Naive thymus-derived CD4-positive, alpha-beta T cell (primary cell): ENCODE measurements at regions of chr7 and their contacts with region 1.

Region 1: GRCh38 chr7:140479062-140479738 is at the start of gene MKRN1:
- DNase-seq: peak; percentile 87 to 93 (median 92)
- ATAC-seq: peak; percentile 93
- H3K4me3 ChIP-seq: peak within 1 kb of the TSS; percentile 84
- H3K4me3 Mint-ChIP-seq: peak within 1 kb of the TSS; percentile 90 to 100 (median 98)
- H3K27ac ChIP-seq: peak within 1 kb of the TSS; percentile 89
- H3K27ac Mint-ChIP-seq: peak within 1 kb of the TSS; percentile 92 to 99 (median 99)
- H3K4me1 ChIP-seq: peaks cover 21 to 28% of the 10 kb centered on the region in 2 donors
- H3K4me1 Mint-ChIP-seq: peaks cover 13 to 35% (median 25%) of the 10 kb centered on the region in 7 donors
- H3K27me3 ChIP-seq: no peaks in the 10 kb centered on the region
- H3K27me3 Mint-ChIP-seq: peaks cover 0 to 15% (median 0%) of the 10 kb centered on the region in 5 donors
- total RNA-seq, gene MKRN1: 85.1 to 162 (median 144) TPM

Region 2: DNA sequence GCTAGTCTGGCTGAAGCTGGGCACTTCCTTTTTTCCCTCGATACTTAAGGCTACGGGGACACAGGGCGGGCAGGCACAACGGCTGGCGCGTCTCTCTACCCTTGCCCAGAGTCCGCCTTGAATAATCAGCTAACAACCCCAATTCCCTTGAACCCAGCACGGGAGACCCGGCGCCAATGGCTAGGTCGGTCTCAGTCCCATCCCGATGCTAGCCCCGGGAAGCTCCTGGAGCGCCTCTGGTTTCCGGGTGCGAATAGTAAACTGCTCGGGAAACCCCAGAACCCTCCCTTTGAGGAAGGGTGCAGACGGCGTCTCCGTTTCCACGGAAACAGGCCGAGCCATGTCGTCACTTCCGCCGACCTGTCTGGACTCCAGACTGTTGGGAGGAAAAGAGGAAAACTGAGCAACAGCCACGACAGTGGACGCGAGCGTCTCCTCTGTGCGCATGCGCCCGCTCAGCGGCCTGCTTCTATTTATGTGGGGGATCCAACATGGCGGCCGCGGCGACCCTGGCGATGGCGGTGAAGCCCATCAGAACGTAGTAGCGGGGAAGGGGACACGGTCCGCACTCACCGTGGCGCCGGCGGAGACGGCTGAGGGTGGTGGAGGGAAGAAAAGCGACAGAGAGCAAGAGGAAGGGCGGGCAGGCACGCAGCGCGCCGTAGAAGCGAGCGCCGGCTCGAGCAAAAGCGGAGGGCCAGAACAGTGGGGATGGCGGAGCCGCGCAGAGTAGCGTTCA is 1248.3 kb before region 1 on chr7 and contains the start of gene UBN2:
- CTCF ChIA-PET with region 1: no interaction called
- POLR2A ChIA-PET with region 1: no interaction called
- intact Hi-C with region 1: loop called in 1 of 2 experiments (anchors 2 kb)
- DNase-seq: peak; percentile 68 to 91 (median 76)
- ATAC-seq: peak; percentile 86
- H3K4me3 ChIP-seq: peak within 1 kb of the TSS; percentile 77
- H3K4me3 Mint-ChIP-seq: peak within 1 kb of the TSS; percentile 96 to 100 (median 99)
- H3K27ac ChIP-seq: peak within 1 kb of the TSS; percentile 85
- H3K27ac Mint-ChIP-seq: peak within 1 kb of the TSS; percentile 93 to 98 (median 96)
- H3K4me1 ChIP-seq: no peaks in the 10 kb centered on the region
- H3K4me1 Mint-ChIP-seq: peaks cover 24 to 33% (median 29%) of the 10 kb centered on the region in 7 donors
- H3K27me3 ChIP-seq: no peaks in the 10 kb centered on the region
- H3K27me3 Mint-ChIP-seq: peaks cover 0 to 36% (median 5%) of the 10 kb centered on the region in 5 donors
- total RNA-seq, gene UBN2: 16.2 to 31.2 (median 20.5) TPM

Region 3: DNA sequence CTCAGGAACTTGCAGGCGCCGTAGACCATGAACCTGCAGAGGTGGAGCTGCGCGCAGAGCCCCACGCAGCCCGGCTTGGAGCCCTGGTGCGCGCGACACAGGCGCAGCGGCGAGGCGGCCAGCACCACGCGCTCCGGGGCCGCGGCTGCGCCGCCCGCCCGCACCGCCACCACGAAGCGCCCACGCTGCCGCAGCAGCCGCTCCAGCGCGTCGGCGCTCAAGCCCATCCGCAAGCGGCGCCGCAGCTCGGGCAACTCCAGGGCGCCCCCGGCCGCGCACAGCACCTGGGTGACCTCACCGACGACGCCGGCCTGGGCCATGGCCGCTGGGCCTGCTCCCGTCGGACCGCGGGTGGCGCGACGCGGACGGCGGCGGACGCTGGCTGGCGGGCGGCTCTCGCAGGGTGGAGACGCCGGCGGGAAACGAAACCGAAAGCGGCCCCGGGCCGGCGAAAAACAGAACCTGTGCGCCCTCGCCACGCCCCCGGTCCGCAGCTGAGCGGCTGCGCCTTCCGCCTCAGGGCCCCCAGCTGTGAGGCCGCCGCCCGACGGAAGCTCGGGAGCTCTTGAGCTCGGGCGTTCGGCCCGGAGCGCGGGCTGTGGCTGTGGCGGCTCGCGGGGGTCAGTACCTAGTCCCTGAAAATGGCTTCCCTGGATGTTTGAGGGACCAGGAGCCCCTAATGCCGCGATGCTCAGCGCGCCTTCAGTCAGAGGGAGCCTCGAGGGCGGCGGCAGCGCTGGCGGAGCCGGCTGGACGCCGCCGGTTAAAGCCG is 416.5 kb before region 1 on chr7 and contains the start of gene PARP12:
- CTCF ChIA-PET with region 1: no interaction called
- POLR2A ChIA-PET with region 1: no interaction called
- intact Hi-C with region 1: loop called (anchors 2 to 5 kb)
- DNase-seq: peak; percentile 77 to 86 (median 83)
- ATAC-seq: peak; percentile 91
- H3K4me3 ChIP-seq: peak within 1 kb of the TSS; percentile 79
- H3K4me3 Mint-ChIP-seq: peak within 1 kb of the TSS; percentile 79 to 94 (median 90)
- H3K27ac ChIP-seq: peak within 1 kb of the TSS; percentile 81
- H3K27ac Mint-ChIP-seq: peak within 1 kb of the TSS; percentile 83 to 95 (median 92)
- H3K4me1 ChIP-seq: peaks cover 32 to 38% of the 10 kb centered on the region in 2 donors
- H3K4me1 Mint-ChIP-seq: peaks cover 34 to 55% (median 48%) of the 10 kb centered on the region in 7 donors
- H3K27me3 ChIP-seq: no peaks in the 10 kb centered on the region
- H3K27me3 Mint-ChIP-seq: peaks cover 0 to 7% (median 0%) of the 10 kb centered on the region in 5 donors
- total RNA-seq, gene PARP12: 66.2 to 145 (median 94.5) TPM

Region 4: GRCh38 chr7:140397784-140398750 is 81.1 kb before region 1 on chr7 and contains the start of gene SLC37A3:
- CTCF ChIA-PET with region 1: no interaction called
- POLR2A ChIA-PET with region 1: interaction called, 4 read pairs
- intact Hi-C with region 1: loop called in 1 of 2 experiments (anchors 1 kb)
- DNase-seq: peak; percentile 74 to 93 (median 80)
- ATAC-seq: peak; percentile 97
- H3K4me3 ChIP-seq: peak within 1 kb of the TSS; percentile 67
- H3K4me3 Mint-ChIP-seq: peak within 1 kb of the TSS; percentile 79 to 95 (median 90)
- H3K27ac ChIP-seq: peak within 1 kb of the TSS; percentile 84
- H3K27ac Mint-ChIP-seq: peak within 1 kb of the TSS; percentile 14 to 92 (median 85)
- H3K4me1 ChIP-seq: peaks cover 0 to 15% of the 10 kb centered on the region in 2 donors
- H3K4me1 Mint-ChIP-seq: peaks cover 22 to 41% (median 31%) of the 10 kb centered on the region in 7 donors
- H3K27me3 ChIP-seq: no peaks in the 10 kb centered on the region
- H3K27me3 Mint-ChIP-seq: no peaks in the 10 kb centered on the region
- total RNA-seq, gene SLC37A3: 26.8 to 72.7 (median 39.4) TPM

Region 5: GRCh38 chr7:140673063-140673773 is 194.0 kb after region 1 on chr7:
- CTCF ChIA-PET with region 1: interaction called, 4 read pairs
- POLR2A ChIA-PET with region 1: interaction called, 3 read pairs
- intact Hi-C with region 1: loop called (anchors 1 kb)
- DNase-seq: peak; percentile 56 to 78 (median 75)
- ATAC-seq: peak; percentile 82
- H3K4me3 ChIP-seq: peak overlapping the region; percentile 82
- H3K4me3 Mint-ChIP-seq: peak overlapping the region; percentile 81 to 94 (median 89)
- H3K27ac ChIP-seq: peak overlapping the region; percentile 91
- H3K27ac Mint-ChIP-seq: peak overlapping the region; percentile 68 to 97 (median 88)
- H3K4me1 ChIP-seq: peaks cover 11 to 14% of the 10 kb centered on the region in 2 donors
- H3K4me1 Mint-ChIP-seq: peaks cover 16 to 42% (median 37%) of the 10 kb centered on the region in 7 donors
- H3K27me3 ChIP-seq: no peaks in the 10 kb centered on the region
- H3K27me3 Mint-ChIP-seq: peaks cover 0 to 7% (median 0%) of the 10 kb centered on the region in 5 donors

Region 6: GRCh38 chr7:141014524-141015395 is 535.6 kb after region 1 on chr7 and contains the start of gene MRPS33:
- CTCF ChIA-PET with region 1: interaction called, 4 read pairs
- POLR2A ChIA-PET with region 1: interaction called, 7 read pairs
- intact Hi-C with region 1: loop called (anchors 1 kb)
- DNase-seq: peak; percentile 79 to 97 (median 96)
- ATAC-seq: peak; percentile 99
- H3K4me3 ChIP-seq: peak within 1 kb of the TSS; percentile 82
- H3K4me3 Mint-ChIP-seq: peak within 1 kb of the TSS; percentile 85 to 99 (median 98)
- H3K27ac ChIP-seq: peak within 1 kb of the TSS; percentile 95
- H3K27ac Mint-ChIP-seq: peak within 1 kb of the TSS; percentile 97 to 100 (median 100)
- H3K4me1 ChIP-seq: peaks cover 8 to 16% of the 10 kb centered on the region in 2 donors
- H3K4me1 Mint-ChIP-seq: peaks cover 10 to 49% (median 39%) of the 10 kb centered on the region in 7 donors
- H3K27me3 ChIP-seq: no peaks in the 10 kb centered on the region
- H3K27me3 Mint-ChIP-seq: peaks cover 5 to 29% (median 8%) of the 10 kb centered on the region in 5 donors
- total RNA-seq, gene MRPS33: 25.9 to 69.1 (median 48.4) TPM